ENCODE measurements at regions of chr9 and their contacts with region 1.

Region 1: DNA sequence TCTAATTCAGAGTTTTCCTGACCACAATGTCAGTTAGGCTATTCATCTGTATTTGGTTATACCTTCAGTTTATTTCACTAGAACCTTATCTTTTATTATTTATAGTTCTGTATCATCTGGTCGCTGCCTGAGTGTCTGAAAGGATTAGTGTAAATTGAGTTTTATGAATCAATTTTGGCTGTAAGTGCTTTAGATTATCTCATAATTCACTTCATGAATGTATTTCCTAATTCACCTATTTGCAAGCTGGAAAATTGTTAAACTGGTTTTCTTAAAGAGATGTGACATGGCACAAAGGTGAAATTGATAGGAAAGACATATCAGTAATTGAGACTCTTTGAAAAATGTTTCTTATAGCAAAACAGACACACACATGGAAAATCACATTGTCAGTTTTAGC is 242.4 kb upstream of the ACO1 start:
- DNase-seq: no peak
- H3K4me3 ChIP-seq: no peak overlapping the region
- CTCF ChIP-seq: no peak
- POLR2A ChIP-seq: no peak

Region 2: DNA sequence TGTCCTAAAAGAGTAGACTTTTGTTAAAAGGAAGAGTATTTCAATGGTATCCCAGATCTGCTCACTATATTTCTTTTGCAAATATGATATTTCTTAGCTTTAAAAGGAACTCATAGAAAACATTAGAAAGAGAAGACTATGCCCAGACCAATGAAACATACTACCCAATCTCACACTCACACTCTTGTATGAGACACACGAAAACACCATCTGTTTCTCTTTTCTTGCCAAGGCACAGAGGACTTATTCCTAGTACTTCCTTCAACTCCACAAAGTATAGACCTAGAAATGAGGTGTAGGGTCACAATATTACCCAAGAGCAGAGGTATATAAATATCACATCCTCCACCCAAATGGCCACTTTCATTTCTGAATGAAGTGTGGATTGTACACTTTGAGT is 50.0 kb before region 1 on chr9:
- intact Hi-C with region 1: loop called (anchors 10 kb)
- DNase-seq: no peak
- H3K4me3 ChIP-seq: no peak overlapping the region
- CTCF ChIP-seq: no peak
- POLR2A ChIP-seq: no peak

Region 3: DNA sequence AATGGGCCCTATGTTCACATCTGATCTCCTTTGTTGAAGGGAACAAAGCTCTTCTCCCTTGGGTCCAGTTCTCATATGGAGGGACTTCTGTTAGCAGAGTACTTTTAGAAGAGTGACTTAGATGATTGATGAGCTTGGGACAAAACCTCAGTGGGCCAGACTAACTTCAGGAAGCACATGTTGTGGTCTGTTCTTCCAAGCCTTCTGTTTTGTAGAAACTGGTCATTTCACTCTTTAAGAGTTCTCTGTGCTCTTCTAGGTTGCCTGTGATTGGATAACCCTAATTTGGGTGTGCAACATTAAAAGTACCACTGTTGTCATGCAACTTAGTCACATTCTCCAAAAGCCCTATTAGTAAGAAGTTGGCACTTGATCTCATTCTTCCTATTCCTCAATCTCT is 58.8 kb after region 1 on chr9:
- intact Hi-C with region 1: no loop called
- DNase-seq: no peak
- H3K4me3 ChIP-seq: no peak overlapping the region
- CTCF ChIP-seq: no peak
- POLR2A ChIP-seq: no peak

Region 4: DNA sequence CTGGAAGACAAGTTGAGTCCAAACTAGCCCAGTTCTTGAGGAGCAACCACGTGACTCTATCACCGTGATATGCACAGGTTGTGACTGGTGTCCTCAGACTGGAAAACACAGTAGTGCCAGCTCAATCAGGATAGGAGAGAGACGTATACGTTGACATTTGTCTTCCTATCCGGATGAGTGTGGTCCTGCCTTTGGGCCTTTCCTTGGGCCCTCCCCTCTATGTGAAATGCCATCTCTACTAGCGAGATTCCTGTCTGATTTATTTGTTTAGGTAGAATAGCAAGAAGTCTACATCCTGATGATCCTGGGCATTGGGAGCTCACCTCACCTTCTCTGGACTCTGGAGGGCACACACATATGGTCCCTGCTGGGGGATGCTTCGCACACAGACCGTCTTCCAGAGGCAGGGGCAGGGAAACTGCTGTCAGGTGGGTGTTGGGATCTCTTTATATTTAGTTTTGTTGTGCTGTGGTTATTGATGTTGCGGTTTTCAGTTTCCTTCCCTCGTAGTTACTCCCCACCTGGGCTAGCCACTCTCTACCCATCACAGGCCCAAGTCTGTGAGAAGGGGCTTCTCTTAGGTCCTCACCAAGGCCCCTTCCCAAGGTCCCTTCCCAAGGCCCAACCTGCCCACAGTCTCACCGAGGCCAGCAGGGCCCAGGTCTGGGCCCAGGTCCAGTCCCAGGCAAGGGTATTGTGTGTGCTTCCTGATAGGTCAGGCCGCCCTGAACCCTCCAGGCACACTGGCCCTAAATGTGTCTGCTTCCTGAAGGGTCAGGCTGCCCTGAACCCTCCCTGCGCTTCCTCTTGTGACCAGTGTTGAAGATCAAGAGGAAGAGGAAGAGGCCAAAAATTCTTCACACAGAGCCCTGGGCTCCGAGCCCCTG is 1078.8 kb after region 1 on chr9:
- intact Hi-C with region 1: no loop called
- DNase-seq: no peak
- H3K4me3 ChIP-seq: no peak overlapping the region
- CTCF ChIP-seq: no peak
- POLR2A ChIP-seq: no peak

Measured in lower leg skin (tissue), 4 donors.